ENCODE measurements at regions of chr2 and their contacts with region 1.

Region 1: DNA sequence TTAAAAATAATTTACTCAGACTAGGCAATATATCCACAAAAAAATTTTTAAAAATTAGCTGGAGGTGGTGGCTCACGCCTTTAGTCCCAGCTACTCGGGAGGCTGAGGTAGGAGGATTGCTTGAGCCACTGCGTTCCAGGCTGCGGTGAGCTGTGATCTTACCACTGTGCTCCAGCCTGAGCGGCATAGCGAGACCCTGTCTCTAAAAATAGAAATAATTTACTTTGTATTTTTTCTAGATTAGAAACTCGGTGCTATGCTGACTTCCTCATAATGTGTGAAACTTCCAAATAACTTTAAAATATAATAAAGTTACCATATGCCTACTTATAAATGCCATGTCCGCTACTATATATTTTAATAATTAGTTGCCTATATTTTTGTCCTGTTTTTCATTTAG is 6.7 kb downstream of the PPIG start:
- DNase-seq: no peak
- ATAC-seq: no peak; the same call in 1 of the 2 replicates
- H3K4me3 ChIP-seq: no peak overlapping the region
- H3K27ac ChIP-seq: no peak overlapping the region
- H3K4me1 ChIP-seq: peaks cover 6% of the 10 kb centered on the region; the same call in 1 of the 2 replicates
- H3K27me3 ChIP-seq: no peaks in the 10 kb centered on the region
- CTCF ChIP-seq: no peak

Region 2: DNA sequence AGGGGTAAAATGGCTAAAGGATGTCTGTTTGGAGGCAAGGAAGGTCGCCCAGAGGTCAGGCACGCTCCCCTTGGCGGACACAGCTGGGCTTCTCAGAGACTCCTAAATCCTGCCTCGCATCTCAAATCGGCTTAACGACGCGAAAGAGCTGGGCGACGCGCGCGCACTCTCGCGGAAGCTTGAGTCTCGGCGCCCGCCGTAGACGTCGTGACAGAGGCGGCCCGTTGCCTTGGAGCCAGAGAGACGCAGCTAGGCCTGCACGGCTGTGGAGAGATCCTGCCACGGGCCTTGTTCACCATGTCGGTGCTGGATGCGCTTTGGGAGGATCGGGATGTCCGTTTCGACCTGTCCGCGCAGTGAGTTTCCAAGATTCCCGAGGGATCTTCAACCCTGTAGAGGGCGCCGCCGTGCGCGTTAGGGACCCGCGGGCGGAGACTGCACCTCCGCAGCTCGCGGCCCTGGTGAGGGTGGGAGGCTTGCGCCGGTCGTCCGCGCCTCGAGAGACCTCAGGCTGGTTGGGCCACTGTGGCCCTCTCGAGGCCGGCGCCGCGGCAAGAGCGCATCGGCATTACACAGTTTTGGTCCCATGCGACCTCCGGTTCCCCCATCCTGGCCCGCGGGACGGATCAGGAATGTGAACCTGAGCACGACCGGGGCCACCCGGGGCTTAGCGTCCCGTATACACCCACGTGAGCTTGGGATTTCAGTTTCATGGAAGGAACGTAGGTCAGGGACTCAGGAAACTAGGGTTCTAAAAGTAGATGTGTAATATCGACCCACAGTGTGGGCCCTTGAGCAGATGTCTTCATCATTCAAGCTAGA is 111.3 kb before region 1 on chr2 and contains the start of gene BBS5:
- CTCF ChIA-PET with region 1: no interaction called
- POLR2A ChIA-PET with region 1: interaction called, 13 read pairs
- in situ Hi-C with region 1: no loop called
- intact Hi-C with region 1: no loop called
- DNase-seq: peak; percentile 33
- ATAC-seq: peak; percentile 98
- H3K4me3 ChIP-seq: peak within 1 kb of the TSS; percentile 82 to 85
- H3K27ac ChIP-seq: peak within 1 kb of the TSS; percentile 80
- H3K4me1 ChIP-seq: no peaks in the 10 kb centered on the region
- H3K27me3 ChIP-seq: no peaks in the 10 kb centered on the region
- CTCF ChIP-seq: peak; percentile 78
- total RNA-seq, gene BBS5: 7.5 TPM

Region 3: GRCh38 chr2:169495310-169495928 is 95.4 kb before region 1 on chr2:
- CTCF ChIA-PET with region 1: no interaction called
- POLR2A ChIA-PET with region 1: no interaction called
- in situ Hi-C with region 1: no loop called
- intact Hi-C with region 1: no loop called
- DNase-seq: no peak
- ATAC-seq: no peak
- H3K4me3 ChIP-seq: no peak overlapping the region
- H3K27ac ChIP-seq: no peak overlapping the region
- H3K4me1 ChIP-seq: no peaks in the 10 kb centered on the region
- H3K27me3 ChIP-seq: no peaks in the 10 kb centered on the region
- CTCF ChIP-seq: no peak

Region 4: GRCh38 chr2:170361090-170361936 is 770.5 kb after region 1 on chr2:
- CTCF ChIA-PET with region 1: no interaction called
- POLR2A ChIA-PET with region 1: no interaction called
- in situ Hi-C with region 1: no loop called
- intact Hi-C with region 1: no loop called
- DNase-seq: peak; percentile 15
- ATAC-seq: peak; percentile 95
- H3K4me3 ChIP-seq: no peak overlapping the region
- H3K27ac ChIP-seq: no peak overlapping the region
- H3K4me1 ChIP-seq: no peaks in the 10 kb centered on the region; the same call in 1 of the 2 replicates
- H3K27me3 ChIP-seq: peaks cover 14% of the 10 kb centered on the region
- CTCF ChIP-seq: peak; percentile 87

Region 5: GRCh38 chr2:170386554-170386953 is 795.8 kb after region 1 on chr2:
- CTCF ChIA-PET with region 1: no interaction called
- POLR2A ChIA-PET with region 1: interaction called, 15 read pairs
- in situ Hi-C with region 1: no loop called
- intact Hi-C with region 1: no loop called
- DNase-seq: no peak
- ATAC-seq: peak; percentile 63; the same call in 1 of the 2 replicates
- H3K4me3 ChIP-seq: no peak overlapping the region
- H3K27ac ChIP-seq: peak overlapping the region; percentile 53
- H3K4me1 ChIP-seq: peaks cover 6% of the 10 kb centered on the region; the same call in 1 of the 2 replicates
- H3K27me3 ChIP-seq: no peaks in the 10 kb centered on the region; the same call in 1 of the 2 replicates
- CTCF ChIP-seq: no peak

Measured in Panc1 (cell line).